Activated CD4-positive, alpha-beta T cell treated with anti-CD3 and anti-CD28 coated beads for 36 hours (primary cell): ENCODE measurements at regions of chr10 and their contacts with region 1.

Region 1: DNA sequence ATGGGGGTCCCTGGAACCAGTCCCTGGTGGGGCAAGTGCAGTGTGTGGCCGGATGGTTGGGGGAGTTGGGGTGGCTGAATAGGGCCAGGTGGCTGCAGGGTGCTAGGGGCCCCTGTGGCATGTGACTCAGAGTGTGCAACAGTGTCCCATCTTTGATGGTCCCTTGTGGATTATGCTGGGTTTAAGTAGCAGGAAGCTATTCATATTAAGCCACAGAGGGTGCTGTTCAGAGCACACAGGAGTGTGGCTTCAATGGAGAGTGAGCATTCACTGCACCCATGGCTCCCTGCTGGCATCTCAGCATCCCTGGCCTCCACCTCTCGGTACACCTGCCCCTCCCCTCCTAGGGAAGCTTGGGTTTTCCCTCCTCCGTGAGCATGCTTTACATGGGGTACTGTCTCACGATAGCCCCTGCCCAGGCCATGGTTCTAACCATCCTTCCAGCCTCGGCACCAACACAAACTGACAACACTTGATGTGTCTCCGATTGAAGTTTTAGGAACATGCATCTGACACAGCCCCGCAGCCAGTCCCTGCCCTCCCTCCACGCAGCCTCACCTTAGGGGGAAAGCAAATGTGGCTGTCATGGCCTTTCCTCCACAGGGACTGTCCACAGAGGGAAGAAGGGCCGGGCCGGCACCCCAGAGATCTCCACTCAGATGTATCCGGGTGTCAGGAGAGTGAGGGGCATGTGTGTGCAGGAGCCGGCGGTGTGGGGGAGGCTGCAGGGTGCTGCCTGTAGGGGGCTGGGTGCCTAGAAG is 30.4 kb upstream of the PPIF start:
- DNase-seq: peak; percentile 51
- ATAC-seq: peak; percentile 55
- H3K4me3 Mint-ChIP-seq: peak overlapping the region; percentile 49
- H3K27ac Mint-ChIP-seq: peak overlapping the region; percentile 44
- H3K4me1 Mint-ChIP-seq: peaks cover 61% of the 10 kb centered on the region
- H3K27me3 Mint-ChIP-seq: no peaks in the 10 kb centered on the region

Region 2: GRCh38 chr10:78774999-78775711 is 541.7 kb before region 1 on chr10:
- CTCF ChIA-PET with region 1: no interaction called
- POLR2A ChIA-PET with region 1: no interaction called
- intact Hi-C with region 1: no loop called
- DNase-seq: no peak
- ATAC-seq: no peak
- H3K4me3 Mint-ChIP-seq: no peak overlapping the region
- H3K27ac Mint-ChIP-seq: no peak overlapping the region
- H3K4me1 Mint-ChIP-seq: no peaks in the 10 kb centered on the region
- H3K27me3 Mint-ChIP-seq: no peaks in the 10 kb centered on the region

Region 3: GRCh38 chr10:79249186-79250121 is 67.4 kb before region 1 on chr10:
- CTCF ChIA-PET with region 1: interaction called, 3 read pairs
- POLR2A ChIA-PET with region 1: no interaction called
- intact Hi-C with region 1: loop called (anchors 2 to 5 kb)
- DNase-seq: peak; percentile 60
- ATAC-seq: peak; percentile 82
- H3K4me3 Mint-ChIP-seq: peak overlapping the region; percentile 28
- H3K27ac Mint-ChIP-seq: peak overlapping the region; percentile 80
- H3K4me1 Mint-ChIP-seq: peaks cover 67% of the 10 kb centered on the region
- H3K27me3 Mint-ChIP-seq: no peaks in the 10 kb centered on the region

Region 4: GRCh38 chr10:79286318-79286951 is 30.4 kb before region 1 on chr10:
- CTCF ChIA-PET with region 1: interaction called, 3 read pairs
- POLR2A ChIA-PET with region 1: no interaction called
- intact Hi-C with region 1: loop called (anchors 2 to 5 kb)
- DNase-seq: peak; percentile 92
- ATAC-seq: peak; percentile 88
- H3K4me3 Mint-ChIP-seq: peak overlapping the region; percentile 37
- H3K27ac Mint-ChIP-seq: peak overlapping the region; percentile 85
- H3K4me1 Mint-ChIP-seq: peaks cover 41% of the 10 kb centered on the region
- H3K27me3 Mint-ChIP-seq: no peaks in the 10 kb centered on the region

Region 5: GRCh38 chr10:79331709-79332108 is 14.9 kb after region 1 on chr10:
- CTCF ChIA-PET with region 1: interaction called, 26 read pairs
- POLR2A ChIA-PET with region 1: interaction called, 15 read pairs
- intact Hi-C with region 1: loop called in 1 of 2 experiments (anchors 2 kb)
- DNase-seq: peak; percentile 93
- ATAC-seq: peak; percentile 98
- H3K4me3 Mint-ChIP-seq: peak overlapping the region; percentile 9
- H3K27ac Mint-ChIP-seq: peak overlapping the region; percentile 90
- H3K4me1 Mint-ChIP-seq: peaks cover 40% of the 10 kb centered on the region
- H3K27me3 Mint-ChIP-seq: no peaks in the 10 kb centered on the region